ENCODE measurements at regions of chr7 and their contacts with region 1.

Region 1: DNA sequence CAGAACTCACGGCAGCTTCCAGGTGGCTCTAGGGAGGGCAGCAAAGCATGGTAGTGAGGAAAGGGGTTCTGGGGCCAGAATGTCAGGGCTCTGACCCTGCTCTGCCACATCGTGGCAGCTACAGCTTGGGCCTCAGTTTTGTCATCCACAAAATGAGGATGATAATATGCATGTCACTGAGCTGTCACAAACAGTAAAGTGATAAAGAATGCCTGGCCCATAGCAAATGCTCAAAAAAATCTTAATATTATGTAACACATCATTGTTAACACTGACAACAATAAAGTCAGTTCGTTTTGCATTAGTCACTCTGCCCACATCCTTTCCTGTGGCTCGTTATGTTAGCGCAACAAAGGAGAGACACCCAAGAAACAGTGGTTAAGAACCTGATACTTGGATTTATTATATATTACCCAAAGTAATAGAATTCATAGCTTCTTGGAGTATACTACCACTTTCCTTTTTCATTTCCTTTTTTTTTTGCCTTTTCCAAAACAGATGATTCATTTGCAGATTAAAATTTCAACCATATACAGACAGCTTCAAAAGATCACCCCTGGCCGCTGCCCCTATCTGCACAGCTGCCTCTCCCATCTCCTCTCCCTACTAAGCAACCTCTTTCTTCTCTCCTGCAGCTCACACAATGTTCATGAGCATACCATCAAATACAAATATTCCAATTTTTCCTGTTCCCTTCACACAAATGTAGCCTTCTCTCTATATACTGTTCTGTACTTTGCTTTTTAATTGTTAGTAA is 45.5 kb upstream of the DDC start:
- DNase-seq: peak; percentile 71
- H3K4me3 Mint-ChIP-seq: no peak overlapping the region
- H3K27ac Mint-ChIP-seq: no peak overlapping the region
- H3K4me1 Mint-ChIP-seq: peaks cover 30% of the 10 kb centered on the region
- H3K27me3 Mint-ChIP-seq: no peaks in the 10 kb centered on the region

Region 2: DNA sequence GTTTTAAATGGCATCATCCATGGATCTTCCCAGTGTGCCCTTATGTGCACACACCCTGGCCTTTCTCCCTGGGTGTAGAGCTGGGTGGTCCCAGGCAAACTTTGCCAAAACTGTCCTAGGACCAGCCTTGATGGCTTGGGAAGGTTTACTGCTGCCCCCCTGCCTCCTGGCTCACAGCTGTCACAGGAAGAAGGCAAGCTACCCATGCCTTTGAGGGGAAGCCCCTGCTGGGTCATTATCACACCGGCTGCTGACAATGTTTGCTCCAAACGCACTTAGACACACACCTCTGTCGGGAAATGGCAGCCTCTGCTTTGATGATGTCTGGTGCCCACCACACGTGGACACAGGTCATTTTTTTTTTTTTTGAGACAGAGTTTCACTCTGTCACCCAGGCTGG is 135.4 kb before region 1 on chr7:
- CTCF ChIA-PET with region 1: no interaction called
- POLR2A ChIA-PET with region 1: no interaction called
- intact Hi-C with region 1: loop called (anchors 2 kb)
- DNase-seq: peak; percentile 55
- H3K4me3 Mint-ChIP-seq: no peak overlapping the region
- H3K27ac Mint-ChIP-seq: no peak overlapping the region
- H3K4me1 Mint-ChIP-seq: peaks cover 7% of the 10 kb centered on the region
- H3K27me3 Mint-ChIP-seq: no peaks in the 10 kb centered on the region

Region 3: DNA sequence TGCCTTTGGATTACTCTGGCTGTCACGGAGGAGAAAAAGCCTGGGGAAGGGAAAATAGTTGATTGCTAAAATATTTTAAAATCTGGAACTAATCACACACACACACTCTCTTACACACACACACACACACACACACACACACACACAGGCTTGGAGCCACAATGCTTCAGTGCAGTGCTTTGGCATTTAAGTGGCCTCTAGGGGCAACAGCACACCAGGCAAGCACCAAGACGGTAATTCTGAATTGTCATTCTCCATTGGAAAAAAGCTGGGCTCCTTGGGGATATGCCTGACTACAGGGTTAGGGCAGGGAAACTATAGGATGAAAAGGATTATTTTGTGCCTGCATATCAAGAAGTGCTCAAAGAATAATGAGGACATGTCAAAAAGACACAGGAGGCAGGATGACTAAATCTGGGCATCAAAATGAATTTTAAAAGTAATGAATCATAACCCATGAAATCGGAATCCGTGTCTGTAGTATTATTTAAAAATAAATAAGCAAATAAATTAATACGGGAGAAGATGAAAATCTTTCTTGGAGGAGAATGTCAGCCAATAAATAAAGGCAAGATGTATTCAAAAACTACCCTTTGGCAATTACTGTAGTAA is 15.1 kb before region 1 on chr7:
- CTCF ChIA-PET with region 1: interaction called, 3 read pairs
- POLR2A ChIA-PET with region 1: no interaction called
- intact Hi-C with region 1: loop called (anchors 1 kb)
- DNase-seq: peak; percentile 24
- H3K4me3 Mint-ChIP-seq: no peak overlapping the region
- H3K27ac Mint-ChIP-seq: no peak overlapping the region
- H3K4me1 Mint-ChIP-seq: peaks cover 21% of the 10 kb centered on the region
- H3K27me3 Mint-ChIP-seq: peaks cover 6% of the 10 kb centered on the region

Region 4: GRCh38 chr7:50679218-50680007 is 68.7 kb after region 1 on chr7:
- CTCF ChIA-PET with region 1: interaction called, 11 read pairs
- POLR2A ChIA-PET with region 1: no interaction called
- intact Hi-C with region 1: loop called (anchors 1 kb)
- DNase-seq: no peak
- H3K4me3 Mint-ChIP-seq: no peak overlapping the region
- H3K27ac Mint-ChIP-seq: no peak overlapping the region
- H3K4me1 Mint-ChIP-seq: no peaks in the 10 kb centered on the region
- H3K27me3 Mint-ChIP-seq: no peaks in the 10 kb centered on the region

Region 5: GRCh38 chr7:51141451-51142003 is 530.8 kb after region 1 on chr7:
- CTCF ChIA-PET with region 1: interaction called, 8 read pairs
- POLR2A ChIA-PET with region 1: no interaction called
- intact Hi-C with region 1: loop called (anchors 5 kb)
- DNase-seq: peak; percentile 27
- H3K4me3 Mint-ChIP-seq: no peak overlapping the region
- H3K27ac Mint-ChIP-seq: no peak overlapping the region
- H3K4me1 Mint-ChIP-seq: peaks cover 17% of the 10 kb centered on the region
- H3K27me3 Mint-ChIP-seq: peaks cover 5% of the 10 kb centered on the region